ENCODE measurements at regions of chr20 and their contacts with region 1.

Region 1: DNA sequence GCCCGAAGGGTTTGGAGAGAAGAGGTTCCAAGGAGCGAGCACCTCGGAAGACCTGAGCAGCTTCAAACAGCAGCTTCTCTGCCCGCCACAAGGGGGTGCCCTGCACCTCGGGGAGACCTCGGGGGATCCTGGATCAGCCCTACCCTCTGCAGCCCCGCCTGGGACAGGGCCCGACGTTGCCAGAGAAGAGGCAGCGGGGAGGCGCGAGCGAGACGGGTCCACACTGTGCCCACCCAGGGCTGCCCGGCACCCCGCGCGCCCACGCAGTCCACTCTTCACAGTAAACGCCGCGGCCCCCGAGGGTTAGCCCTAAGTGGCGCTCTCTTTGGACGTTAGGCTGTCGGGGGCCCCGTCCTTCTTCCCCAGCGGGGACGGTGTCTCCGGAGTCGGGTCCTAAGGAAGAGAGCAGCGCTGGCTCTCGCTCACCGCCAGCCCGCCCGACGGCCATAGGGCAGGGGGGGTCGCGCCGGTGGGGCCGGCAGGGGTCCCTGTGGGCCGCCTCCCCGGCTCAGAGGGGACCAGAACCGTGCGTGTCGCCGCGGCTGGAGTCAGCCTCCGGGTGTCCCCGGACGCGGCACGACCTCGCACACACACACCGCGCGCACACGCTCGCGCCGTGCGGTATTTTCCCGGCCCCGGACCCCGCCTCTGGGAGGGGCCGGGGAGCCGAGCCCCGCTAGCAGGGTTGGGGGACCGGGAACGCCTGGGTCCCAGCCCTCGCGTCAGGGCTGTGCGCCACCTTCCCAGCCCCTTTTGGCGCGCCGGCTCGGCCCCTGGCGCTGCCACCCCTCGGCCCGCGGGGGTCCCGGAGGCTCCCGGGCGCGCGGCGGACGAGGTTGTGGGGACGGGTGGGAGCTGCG is 929 bp downstream of the CDH22 start:
- DNase-seq: peak; percentile 65 to 84 (median 70)
- H3K4me3 ChIP-seq: no peak overlapping the region
- H3K4me3 Mint-ChIP-seq: peak overlapping the region; percentile 39 to 76 (median 52)
- H3K27ac ChIP-seq: no peak overlapping the region
- H3K27ac Mint-ChIP-seq: no peak overlapping the region
- H3K4me1 ChIP-seq: peaks cover 11% of the 10 kb centered on the region
- H3K4me1 Mint-ChIP-seq: peaks cover 13 to 24% (median 13%) of the 10 kb centered on the region in 3 donors
- H3K27me3 ChIP-seq: peaks cover 32% of the 10 kb centered on the region
- H3K27me3 Mint-ChIP-seq: peaks cover 61 to 82% of the 10 kb centered on the region in 2 donors

Region 2: GRCh38 chr20:46237227-46237626 is 70.1 kb before region 1 on chr20:
- CTCF ChIA-PET with region 1: no interaction called
- POLR2A ChIA-PET with region 1: no interaction called
- DNase-seq: no peak
- H3K4me3 ChIP-seq: no peak overlapping the region
- H3K4me3 Mint-ChIP-seq: no peak overlapping the region
- H3K27ac ChIP-seq: no peak overlapping the region
- H3K27ac Mint-ChIP-seq: no peak overlapping the region
- H3K4me1 ChIP-seq: no peaks in the 10 kb centered on the region
- H3K4me1 Mint-ChIP-seq: no peaks in the 10 kb centered on the region
- H3K27me3 ChIP-seq: no peaks in the 10 kb centered on the region
- H3K27me3 Mint-ChIP-seq: peaks cover 4 to 34% of the 10 kb centered on the region in 2 donors

Region 3: DNA sequence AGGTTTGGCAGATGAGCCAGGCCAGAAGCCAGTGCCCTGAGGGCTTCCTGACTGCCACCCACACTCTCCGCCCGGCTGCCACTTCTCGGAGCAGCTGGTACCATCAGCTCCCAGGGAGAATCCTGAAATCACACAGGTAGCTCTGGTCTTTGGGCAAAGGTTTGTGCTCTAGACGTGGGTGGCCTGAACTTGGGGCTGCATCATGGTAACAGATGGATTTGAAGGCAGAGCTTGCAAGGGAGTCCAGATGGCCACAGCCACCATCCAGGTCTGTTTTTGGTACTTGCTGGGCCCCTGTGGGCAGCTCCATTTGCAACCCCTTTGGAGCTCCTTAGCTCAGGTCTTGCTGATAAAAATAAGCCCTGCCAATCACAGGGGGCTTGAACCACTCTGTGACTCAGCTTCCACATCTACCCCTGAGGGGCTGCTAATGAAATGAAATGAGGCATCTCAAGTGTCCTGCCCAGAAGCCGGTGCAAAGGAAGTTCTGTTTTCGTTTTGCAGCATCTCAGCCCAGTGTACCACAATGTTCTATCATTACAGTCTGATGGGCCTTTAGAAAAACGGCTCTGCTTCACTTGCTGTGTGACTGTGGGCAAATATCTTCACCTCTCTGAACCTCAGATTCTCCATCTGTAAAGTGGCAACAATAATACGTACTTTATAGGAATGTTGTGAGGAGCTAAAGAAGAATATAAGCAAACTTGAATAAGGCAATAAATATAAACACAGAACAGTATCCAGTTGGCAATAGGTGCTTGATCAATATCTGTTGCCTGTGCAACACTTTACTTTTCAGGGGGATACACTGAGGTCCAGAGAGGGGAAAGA is 26.0 kb after region 1 on chr20:
- CTCF ChIA-PET with region 1: no interaction called
- POLR2A ChIA-PET with region 1: no interaction called
- DNase-seq: no peak
- H3K4me3 ChIP-seq: no peak overlapping the region
- H3K4me3 Mint-ChIP-seq: no peak overlapping the region
- H3K27ac ChIP-seq: no peak overlapping the region
- H3K27ac Mint-ChIP-seq: no peak overlapping the region
- H3K4me1 ChIP-seq: no peaks in the 10 kb centered on the region
- H3K4me1 Mint-ChIP-seq: no peaks in the 10 kb centered on the region
- H3K27me3 ChIP-seq: peaks cover 26% of the 10 kb centered on the region
- H3K27me3 Mint-ChIP-seq: peaks cover 18 to 78% of the 10 kb centered on the region in 2 donors

Region 4: GRCh38 chr20:46411637-46412036 is 104.3 kb after region 1 on chr20:
- CTCF ChIA-PET with region 1: interaction called, 18 read pairs
- POLR2A ChIA-PET with region 1: interaction called, 4 read pairs
- DNase-seq: no peak
- H3K4me3 ChIP-seq: no peak overlapping the region
- H3K4me3 Mint-ChIP-seq: peak overlapping the region in 2 of 7 donors; percentile 7 to 31
- H3K27ac ChIP-seq: no peak overlapping the region
- H3K27ac Mint-ChIP-seq: peak overlapping the region in 2 of 8 donors; percentile 54 to 61
- H3K4me1 ChIP-seq: peaks cover 6% of the 10 kb centered on the region
- H3K4me1 Mint-ChIP-seq: peaks cover 16 to 30% (median 21%) of the 10 kb centered on the region in 3 donors
- H3K27me3 ChIP-seq: peaks cover 5% of the 10 kb centered on the region
- H3K27me3 Mint-ChIP-seq: peaks cover 29 to 40% of the 10 kb centered on the region in 2 donors

Region 5: DNA sequence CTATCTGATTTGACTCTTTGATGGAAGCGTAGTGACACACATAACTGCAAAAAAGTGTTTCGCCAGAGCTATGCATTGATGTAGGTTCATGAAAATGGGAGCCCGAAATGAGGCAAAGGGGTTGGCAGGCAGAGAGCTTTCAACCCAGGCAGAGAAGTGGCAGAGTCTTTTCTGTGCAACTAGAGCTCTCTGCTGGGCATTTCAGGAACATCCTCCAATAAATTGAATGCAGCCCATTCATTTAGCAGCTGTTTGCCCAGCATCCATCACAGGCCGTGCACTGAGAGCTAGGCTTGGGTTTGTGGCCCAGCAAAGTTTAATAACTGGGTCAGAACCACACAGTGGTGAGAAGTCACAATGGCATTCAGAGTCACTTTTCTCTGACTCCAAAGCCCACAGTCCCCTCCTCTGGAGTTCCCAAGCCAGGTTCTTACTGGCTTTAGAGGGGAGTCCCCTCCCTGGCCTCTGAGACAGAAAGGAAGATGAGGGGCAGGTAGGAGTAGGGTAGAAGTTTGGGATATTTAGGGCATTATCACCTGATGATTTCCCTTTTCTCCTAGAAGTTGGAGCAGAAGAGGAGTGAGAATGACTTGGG is 130.9 kb after region 1 on chr20:
- CTCF ChIA-PET with region 1: interaction called, 10 read pairs
- POLR2A ChIA-PET with region 1: no interaction called
- DNase-seq: peak in 2 of 5 donors; percentile 13 to 27
- H3K4me3 ChIP-seq: no peak overlapping the region
- H3K4me3 Mint-ChIP-seq: no peak overlapping the region
- H3K27ac ChIP-seq: no peak overlapping the region
- H3K27ac Mint-ChIP-seq: no peak overlapping the region
- H3K4me1 ChIP-seq: no peaks in the 10 kb centered on the region
- H3K4me1 Mint-ChIP-seq: no peaks in the 10 kb centered on the region
- H3K27me3 ChIP-seq: no peaks in the 10 kb centered on the region
- H3K27me3 Mint-ChIP-seq: peaks cover 11 to 52% of the 10 kb centered on the region in 2 donors